ENCODE measurements at regions of chr15 and their contacts with region 1.

Region 1: DNA sequence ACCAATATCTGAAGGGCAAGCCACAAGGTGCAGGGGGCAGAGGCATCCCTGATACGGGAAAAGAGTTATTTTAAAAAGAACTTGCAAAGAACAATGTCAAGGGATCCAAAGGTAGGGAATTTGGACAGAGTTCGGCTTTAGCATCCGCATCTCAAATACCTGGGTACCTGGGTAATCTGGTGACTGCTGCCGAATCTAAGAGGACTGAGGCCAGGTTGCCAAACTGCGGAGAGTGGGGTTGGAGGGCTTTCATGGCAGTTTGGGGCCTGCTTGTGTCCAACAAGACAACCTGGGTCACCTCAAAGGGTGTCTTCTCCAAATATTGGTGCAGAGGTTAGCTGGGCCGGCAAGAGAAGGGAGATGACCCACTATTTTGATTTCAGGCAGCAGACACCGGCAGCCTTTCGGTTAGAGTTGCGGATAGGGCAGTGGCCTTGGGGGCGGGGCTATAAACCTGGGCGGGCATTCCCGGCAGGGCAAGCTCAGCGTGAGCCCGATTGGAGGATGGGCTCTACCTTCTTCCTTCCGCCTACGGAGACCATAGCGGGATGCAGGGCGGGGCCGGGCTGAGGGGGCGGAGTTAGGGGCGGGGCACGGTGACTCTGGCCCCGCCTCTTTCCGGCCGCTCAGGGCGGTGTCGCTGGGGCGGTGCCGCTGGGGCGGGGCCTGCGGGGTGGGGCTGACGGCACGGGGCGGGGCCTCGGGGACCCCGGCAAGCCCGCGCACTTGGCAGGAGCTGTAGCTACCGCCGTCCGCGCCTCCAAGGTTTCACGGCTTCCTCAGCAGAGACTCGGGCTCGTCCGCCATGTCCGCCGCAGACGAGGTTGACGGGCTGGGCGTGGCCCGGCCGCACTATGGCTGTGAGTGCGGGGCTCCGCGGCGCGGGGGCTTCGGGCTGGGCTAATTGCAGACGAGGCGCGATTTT is at the start of gene IQGAP1:
- H3K4me3 Mint-ChIP-seq: peak within 1 kb of the TSS; percentile 91
- H3K27ac Mint-ChIP-seq: peak within 1 kb of the TSS; percentile 99
- H3K4me1 Mint-ChIP-seq: peaks cover 53% of the 10 kb centered on the region
- H3K27me3 Mint-ChIP-seq: no peaks in the 10 kb centered on the region

Region 2: GRCh38 chr15:90352109-90352893 is 35.5 kb before region 1 on chr15 and contains the start of gene ZNF774:
- intact Hi-C with region 1: loop called (anchors 5 kb)
- H3K4me3 Mint-ChIP-seq: peak within 1 kb of the TSS; percentile 92
- H3K27ac Mint-ChIP-seq: peak within 1 kb of the TSS; percentile 85
- H3K4me1 Mint-ChIP-seq: peaks cover 20% of the 10 kb centered on the region
- H3K27me3 Mint-ChIP-seq: peaks cover 10% of the 10 kb centered on the region

Region 3: GRCh38 chr15:90367576-90367975 is 20.2 kb before region 1 on chr15:
- intact Hi-C with region 1: loop called (anchors 1 kb)
- H3K4me3 Mint-ChIP-seq: peak overlapping the region; percentile 44
- H3K27ac Mint-ChIP-seq: peak overlapping the region; percentile 93
- H3K4me1 Mint-ChIP-seq: peaks cover 60% of the 10 kb centered on the region
- H3K27me3 Mint-ChIP-seq: peaks cover 3% of the 10 kb centered on the region

Region 4: GRCh38 chr15:90400406-90401314 is 12.9 kb after region 1 on chr15:
- intact Hi-C with region 1: loop called (anchors 1 kb)
- H3K4me3 Mint-ChIP-seq: peak overlapping the region; percentile 70
- H3K27ac Mint-ChIP-seq: peak overlapping the region; percentile 96
- H3K4me1 Mint-ChIP-seq: peaks cover 69% of the 10 kb centered on the region
- H3K27me3 Mint-ChIP-seq: no peaks in the 10 kb centered on the region